MCF 10A (cell line): ENCODE measurements at regions of chr2 and their contacts with region 1.

Region 1: DNA sequence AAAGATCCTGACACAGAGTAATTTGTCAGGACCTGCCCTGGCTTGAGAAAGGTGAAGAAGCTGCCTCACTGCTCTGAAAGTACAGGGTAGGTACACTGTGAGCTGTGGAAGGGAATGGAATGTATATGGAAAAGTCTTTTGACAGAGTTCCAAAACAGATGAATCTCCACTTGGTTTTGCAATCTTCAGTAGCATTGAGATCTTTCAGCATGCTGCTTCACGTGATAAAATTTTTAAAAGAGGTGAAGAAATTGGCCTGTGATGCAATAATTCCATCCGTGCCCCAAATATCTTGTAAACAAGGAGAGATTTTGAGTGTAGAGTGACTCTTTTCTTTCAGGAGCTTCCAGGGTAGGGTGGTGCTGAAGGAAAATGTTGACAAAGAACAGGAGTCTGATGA is 123.1 kb downstream of the OSR1 start:
- DNase-seq: peak; percentile 93
- H3K4me3 Mint-ChIP-seq: peak overlapping the region; percentile 54
- H3K27ac Mint-ChIP-seq: peak overlapping the region; percentile 95
- H3K4me1 Mint-ChIP-seq: peaks cover 44% of the 10 kb centered on the region
- H3K27me3 Mint-ChIP-seq: no peaks in the 10 kb centered on the region
- CTCF ChIP-seq: no peak

Region 2: GRCh38 chr2:18966131-18966530 is 269.2 kb before region 1 on chr2:
- CTCF ChIA-PET with region 1: no interaction called
- POLR2A ChIA-PET with region 1: no interaction called
- intact Hi-C with region 1: no loop called
- DNase-seq: no peak
- H3K4me3 Mint-ChIP-seq: no peak overlapping the region
- H3K27ac Mint-ChIP-seq: no peak overlapping the region
- H3K4me1 Mint-ChIP-seq: peaks cover 5% of the 10 kb centered on the region
- H3K27me3 Mint-ChIP-seq: no peaks in the 10 kb centered on the region
- CTCF ChIP-seq: no peak

Region 3: DNA sequence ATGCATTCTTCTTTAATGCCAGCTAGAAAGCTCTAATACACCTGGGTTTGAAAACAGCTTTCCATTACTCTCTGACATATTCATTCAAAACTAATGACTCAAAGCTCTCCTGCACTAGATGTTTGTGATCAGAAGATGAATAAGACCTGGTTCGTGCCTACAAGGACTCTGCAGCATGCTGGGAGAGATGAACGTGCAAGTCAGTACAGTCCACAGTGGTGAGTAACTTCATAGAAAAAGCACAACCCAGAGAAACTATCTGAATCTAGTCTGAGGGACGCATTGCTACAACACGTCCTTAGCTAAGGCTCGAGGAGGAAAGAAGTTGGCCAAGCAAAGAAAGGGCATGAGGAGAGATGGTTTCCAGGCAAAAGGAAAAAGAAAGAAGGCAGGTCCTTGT is 111.2 kb before region 1 on chr2:
- CTCF ChIA-PET with region 1: no interaction called
- POLR2A ChIA-PET with region 1: interaction called, 10 read pairs
- intact Hi-C with region 1: loop called (anchors 1 kb)
- DNase-seq: peak; percentile 41
- H3K4me3 Mint-ChIP-seq: peak overlapping the region; percentile 15
- H3K27ac Mint-ChIP-seq: peak overlapping the region; percentile 4
- H3K4me1 Mint-ChIP-seq: peaks cover 39% of the 10 kb centered on the region
- H3K27me3 Mint-ChIP-seq: no peaks in the 10 kb centered on the region
- CTCF ChIP-seq: no peak

Region 4: GRCh38 chr2:19392221-19392620 is 156.9 kb after region 1 on chr2:
- CTCF ChIA-PET with region 1: no interaction called
- POLR2A ChIA-PET with region 1: no interaction called
- intact Hi-C with region 1: no loop called
- DNase-seq: no peak
- H3K4me3 Mint-ChIP-seq: no peak overlapping the region
- H3K27ac Mint-ChIP-seq: no peak overlapping the region
- H3K4me1 Mint-ChIP-seq: no peaks in the 10 kb centered on the region
- H3K27me3 Mint-ChIP-seq: no peaks in the 10 kb centered on the region
- CTCF ChIP-seq: no peak